GM23248 (cell line): ENCODE measurements at regions of chr6 and their contacts with region 1.

Region 1: DNA sequence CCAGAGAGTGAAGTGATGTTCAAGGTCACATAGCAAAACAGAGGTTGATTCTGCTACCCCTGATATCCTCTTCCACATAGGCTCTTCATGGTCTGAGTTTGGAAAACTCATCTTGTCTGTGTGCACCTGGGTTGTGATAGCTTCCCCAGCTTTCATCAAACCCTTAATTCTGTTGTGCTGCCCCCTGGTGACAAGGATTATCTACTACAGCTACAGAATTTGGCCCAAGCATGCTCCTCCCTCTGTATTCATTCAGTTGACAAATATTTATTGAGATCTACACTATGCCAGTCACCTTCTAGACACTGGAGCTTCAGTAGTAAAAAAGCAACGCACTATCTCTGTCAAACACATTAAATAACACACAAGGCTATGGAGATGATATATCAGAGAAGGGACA is 50.4 kb downstream of the SMPDL3A start:
- DNase-seq: peak; percentile 68
- H3K4me3 ChIP-seq: no peak overlapping the region
- H3K27ac ChIP-seq: no peak overlapping the region
- H3K4me1 ChIP-seq: no peaks in the 10 kb centered on the region
- H3K27me3 ChIP-seq: peaks cover 4% of the 10 kb centered on the region; the same call in 1 of the 2 replicates

Region 2: GRCh38 chr6:122315842-122316241 is 523.6 kb before region 1 on chr6:
- in situ Hi-C with region 1: no loop called
- DNase-seq: no peak
- H3K4me3 ChIP-seq: no peak overlapping the region
- H3K27ac ChIP-seq: no peak overlapping the region
- H3K4me1 ChIP-seq: no peaks in the 10 kb centered on the region
- H3K27me3 ChIP-seq: no peaks in the 10 kb centered on the region

Region 3: GRCh38 chr6:122491919-122492555 is 347.4 kb before region 1 on chr6:
- in situ Hi-C with region 1: loop called (anchors 10 kb)
- DNase-seq: peak; percentile 81
- H3K4me3 ChIP-seq: no peak overlapping the region
- H3K27ac ChIP-seq: no peak overlapping the region
- H3K4me1 ChIP-seq: no peaks in the 10 kb centered on the region
- H3K27me3 ChIP-seq: no peaks in the 10 kb centered on the region

Region 4: GRCh38 chr6:122726649-122727048 is 112.8 kb before region 1 on chr6:
- in situ Hi-C with region 1: loop called (anchors 10 kb)
- DNase-seq: peak; percentile 52
- H3K4me3 ChIP-seq: no peak overlapping the region
- H3K27ac ChIP-seq: no peak overlapping the region
- H3K4me1 ChIP-seq: no peaks in the 10 kb centered on the region
- H3K27me3 ChIP-seq: no peaks in the 10 kb centered on the region